CD4-positive, alpha-beta T cell (primary cell): ENCODE measurements at regions of chr10 and their contacts with region 1.

Region 1: GRCh38 chr10:35195361-35196306 is 69.0 kb downstream of the CREM start:
- DNase-seq: peak; percentile 30 to 98 (median 70)
- ATAC-seq: peak; percentile 80
- H3K4me3 ChIP-seq: peak overlapping the region; percentile 52
- H3K4me3 Mint-ChIP-seq: peak overlapping the region; percentile 88
- H3K27ac ChIP-seq: peak overlapping the region; percentile 93 to 97
- H3K27ac Mint-ChIP-seq: peak overlapping the region; percentile 96
- H3K4me1 ChIP-seq: peaks cover 14% of the 10 kb centered on the region
- H3K4me1 Mint-ChIP-seq: peaks cover 30% of the 10 kb centered on the region
- H3K27me3 ChIP-seq: no peaks in the 10 kb centered on the region
- H3K27me3 Mint-ChIP-seq: no peaks in the 10 kb centered on the region
- CTCF ChIP-seq: peak; percentile 94

Region 2: GRCh38 chr10:33808475-33808874 is 1387.2 kb before region 1 on chr10:
- CTCF ChIA-PET with region 1: no interaction called
- POLR2A ChIA-PET with region 1: no interaction called
- intact Hi-C with region 1: no loop called
- DNase-seq: no peak
- ATAC-seq: no peak
- H3K4me3 ChIP-seq: no peak overlapping the region
- H3K4me3 Mint-ChIP-seq: no peak overlapping the region
- H3K27ac ChIP-seq: no peak overlapping the region
- H3K27ac Mint-ChIP-seq: no peak overlapping the region
- H3K4me1 ChIP-seq: no peaks in the 10 kb centered on the region
- H3K4me1 Mint-ChIP-seq: no peaks in the 10 kb centered on the region
- H3K27me3 ChIP-seq: no peaks in the 10 kb centered on the region
- H3K27me3 Mint-ChIP-seq: no peaks in the 10 kb centered on the region
- CTCF ChIP-seq: no peak

Region 3: DNA sequence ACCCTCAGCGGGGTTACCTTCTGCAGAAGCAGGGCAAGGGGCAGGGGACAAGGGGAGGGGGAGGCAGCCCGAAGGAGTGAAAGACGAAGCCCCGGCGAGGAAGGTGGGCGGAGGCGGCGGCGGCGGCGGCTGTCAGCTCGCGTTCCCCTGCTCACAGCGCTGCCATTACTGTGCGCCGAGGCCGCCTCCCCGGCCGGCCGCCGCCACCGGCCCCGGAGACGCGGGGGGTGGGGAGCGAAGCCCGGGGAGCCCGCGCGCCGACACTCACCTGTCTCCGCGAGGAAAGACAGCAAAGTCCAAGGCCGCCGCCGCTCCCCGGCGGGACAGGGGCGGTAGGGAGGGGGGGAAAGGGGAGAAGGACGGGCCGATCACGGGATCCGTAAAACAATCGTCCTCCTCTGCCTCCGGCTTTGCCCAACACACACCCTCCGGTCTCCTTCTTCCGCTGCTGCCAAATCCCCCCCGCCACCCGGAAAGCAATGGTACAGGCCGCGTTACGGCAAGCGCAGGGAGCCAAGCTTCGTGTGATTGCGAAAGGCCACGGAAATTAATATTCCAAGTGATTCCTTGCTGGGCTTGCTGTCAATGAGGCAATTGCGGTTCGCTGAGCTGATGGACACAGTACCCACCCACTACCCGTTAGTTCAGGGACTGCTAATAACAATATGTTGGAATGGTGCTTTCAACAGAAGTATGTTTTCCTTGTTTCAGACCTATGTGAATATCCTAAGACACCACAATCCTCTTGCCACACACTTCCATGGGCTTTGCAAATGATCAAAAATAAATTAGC is 105.3 kb before region 1 on chr10 and contains the start of gene CUL2:
- CTCF ChIA-PET with region 1: interaction called, 3 read pairs
- POLR2A ChIA-PET with region 1: interaction called, 36 read pairs
- intact Hi-C with region 1: no loop called
- DNase-seq: peak; percentile 86 to 96 (median 90)
- ATAC-seq: peak; percentile 92
- H3K4me3 ChIP-seq: peak within 1 kb of the TSS; percentile 91
- H3K4me3 Mint-ChIP-seq: peak within 1 kb of the TSS; percentile 98
- H3K27ac ChIP-seq: peak within 1 kb of the TSS; percentile 94 to 96
- H3K27ac Mint-ChIP-seq: peak within 1 kb of the TSS; percentile 93
- H3K4me1 ChIP-seq: peaks cover 44% of the 10 kb centered on the region
- H3K4me1 Mint-ChIP-seq: peaks cover 56% of the 10 kb centered on the region
- H3K27me3 ChIP-seq: no peaks in the 10 kb centered on the region
- H3K27me3 Mint-ChIP-seq: peaks cover 7% of the 10 kb centered on the region
- CTCF ChIP-seq: no peak
- total RNA-seq, gene CUL2: 30.1 to 32.4 TPM

Region 4: GRCh38 chr10:35126530-35127296 is 68.9 kb before region 1 on chr10 and contains the start of gene CREM:
- CTCF ChIA-PET with region 1: interaction called, 102 read pairs
- POLR2A ChIA-PET with region 1: interaction called, 217 read pairs
- intact Hi-C with region 1: loop called (anchors 1 to 2 kb)
- DNase-seq: peak; percentile 97 to 100 (median 100)
- ATAC-seq: peak; percentile 80
- H3K4me3 ChIP-seq: peak within 1 kb of the TSS; percentile 62
- H3K4me3 Mint-ChIP-seq: peak within 1 kb of the TSS; percentile 98
- H3K27ac ChIP-seq: peak within 1 kb of the TSS; percentile 96 to 99
- H3K27ac Mint-ChIP-seq: peak within 1 kb of the TSS; percentile 93
- H3K4me1 ChIP-seq: peaks cover 25% of the 10 kb centered on the region
- H3K4me1 Mint-ChIP-seq: peaks cover 47% of the 10 kb centered on the region
- H3K27me3 ChIP-seq: no peaks in the 10 kb centered on the region
- H3K27me3 Mint-ChIP-seq: no peaks in the 10 kb centered on the region
- CTCF ChIP-seq: peak; percentile 86
- total RNA-seq, gene CREM: 65.7 to 67.0 TPM

Region 5: DNA sequence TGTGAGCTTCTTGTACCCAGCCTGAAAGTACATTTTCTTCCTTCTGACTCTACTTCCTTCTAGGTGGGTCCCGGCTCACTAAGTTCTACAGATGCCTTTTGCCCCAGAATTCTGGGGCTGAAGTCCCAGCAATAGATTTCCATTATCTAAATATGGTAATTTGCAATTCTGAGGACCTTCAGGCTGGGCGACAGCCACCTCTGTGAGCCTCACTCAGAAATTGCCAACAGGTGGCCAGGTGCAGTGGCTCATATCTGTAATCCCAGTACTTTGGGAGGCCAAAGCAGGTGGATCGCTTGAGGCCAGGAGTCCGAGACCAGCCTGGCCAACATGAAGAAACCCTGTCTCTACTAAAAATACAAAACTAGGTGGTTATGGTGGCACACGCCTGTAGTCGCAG is 45.3 kb before region 1 on chr10:
- CTCF ChIA-PET with region 1: interaction called, 16 read pairs
- POLR2A ChIA-PET with region 1: interaction called, 16 read pairs
- intact Hi-C with region 1: no loop called
- DNase-seq: no peak
- ATAC-seq: no peak
- H3K4me3 ChIP-seq: no peak overlapping the region
- H3K4me3 Mint-ChIP-seq: no peak overlapping the region
- H3K27ac ChIP-seq: peak overlapping the region in 1 of 2 donors; percentile 71
- H3K27ac Mint-ChIP-seq: peak overlapping the region; percentile 83
- H3K4me1 ChIP-seq: peaks cover 18% of the 10 kb centered on the region
- H3K4me1 Mint-ChIP-seq: peaks cover 27% of the 10 kb centered on the region
- H3K27me3 ChIP-seq: no peaks in the 10 kb centered on the region
- H3K27me3 Mint-ChIP-seq: no peaks in the 10 kb centered on the region
- CTCF ChIP-seq: no peak

Region 6: GRCh38 chr10:35218339-35218955 is 22.8 kb after region 1 on chr10:
- CTCF ChIA-PET with region 1: interaction called, 30 read pairs
- POLR2A ChIA-PET with region 1: interaction called, 3 read pairs
- intact Hi-C with region 1: loop called (anchors 1 kb)
- DNase-seq: peak; percentile 61 to 92 (median 80)
- ATAC-seq: peak; percentile 90
- H3K4me3 ChIP-seq: no peak overlapping the region
- H3K4me3 Mint-ChIP-seq: no peak overlapping the region
- H3K27ac ChIP-seq: no peak overlapping the region
- H3K27ac Mint-ChIP-seq: no peak overlapping the region
- H3K4me1 ChIP-seq: peaks cover 3% of the 10 kb centered on the region
- H3K4me1 Mint-ChIP-seq: peaks cover 7% of the 10 kb centered on the region
- H3K27me3 ChIP-seq: no peaks in the 10 kb centered on the region
- H3K27me3 Mint-ChIP-seq: peaks cover 12% of the 10 kb centered on the region
- CTCF ChIP-seq: peak; percentile 94

Region 7: GRCh38 chr10:35421553-35422178 is 226.0 kb after region 1 on chr10:
- CTCF ChIA-PET with region 1: no interaction called
- POLR2A ChIA-PET with region 1: no interaction called
- intact Hi-C with region 1: no loop called
- DNase-seq: no peak
- ATAC-seq: no peak
- H3K4me3 ChIP-seq: no peak overlapping the region
- H3K4me3 Mint-ChIP-seq: no peak overlapping the region
- H3K27ac ChIP-seq: no peak overlapping the region
- H3K27ac Mint-ChIP-seq: no peak overlapping the region
- H3K4me1 ChIP-seq: peaks cover 14% of the 10 kb centered on the region
- H3K4me1 Mint-ChIP-seq: peaks cover 86% of the 10 kb centered on the region
- H3K27me3 ChIP-seq: no peaks in the 10 kb centered on the region
- H3K27me3 Mint-ChIP-seq: no peaks in the 10 kb centered on the region
- CTCF ChIP-seq: no peak